HepG2 (cell line): ENCODE measurements at regions of chr5 and their contacts with region 1.

Region 1: DNA sequence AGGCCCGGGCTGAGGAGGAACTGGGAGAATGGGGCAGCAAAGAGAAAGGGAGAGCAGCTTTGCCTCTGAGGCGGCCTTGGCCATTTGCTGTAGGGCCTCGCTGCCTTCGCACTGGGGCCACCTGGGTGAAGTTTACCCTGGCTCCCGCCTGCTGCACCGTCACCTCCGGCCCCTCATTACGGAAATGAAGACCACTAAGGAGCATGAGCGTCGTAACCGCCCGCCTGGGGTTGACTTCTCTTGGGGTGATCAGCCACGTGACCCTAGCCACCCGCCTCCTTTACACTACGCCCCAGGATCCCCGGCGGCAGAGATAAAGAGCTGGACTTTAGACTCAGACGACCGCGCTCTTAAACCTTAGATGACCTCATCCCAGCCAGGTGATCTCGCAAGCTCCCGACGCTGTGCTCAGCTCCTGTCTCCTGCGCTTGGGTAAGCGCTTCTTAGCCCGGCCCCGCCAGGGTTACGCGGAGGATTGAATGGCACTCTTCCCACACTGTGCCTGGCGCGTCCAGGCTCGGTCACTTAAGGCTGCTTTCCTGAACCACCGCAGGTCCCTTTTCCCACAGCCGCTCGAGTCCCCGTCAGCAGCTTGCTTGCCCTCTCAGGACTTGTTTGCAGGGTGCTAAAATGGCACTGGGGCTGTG is 107.9 kb upstream of the LARP1 start:
- DNase-seq: peak; percentile 83
- ATAC-seq: peak; percentile 91
- H3K4me3 ChIP-seq: peak overlapping the region; percentile 62 to 75 (median 63)
- H3K27ac ChIP-seq: peak overlapping the region; percentile 74
- H3K4me1 ChIP-seq: peaks cover 67% of the 10 kb centered on the region
- H3K27me3 ChIP-seq: no peaks in the 10 kb centered on the region
- CTCF ChIP-seq: 0 out of 2 replicates have a peak, but pooled peaks have one; percentile 16
- EP300 ChIP-seq: peak; percentile 32 to 65; a peak in 3 of 4 replicates
- POLR2A ChIP-seq: peak in 1 of 2 experiments; percentile 80; a peak in 2 of 4 replicates
- RAD21 ChIP-seq: no peak

Region 2: DNA sequence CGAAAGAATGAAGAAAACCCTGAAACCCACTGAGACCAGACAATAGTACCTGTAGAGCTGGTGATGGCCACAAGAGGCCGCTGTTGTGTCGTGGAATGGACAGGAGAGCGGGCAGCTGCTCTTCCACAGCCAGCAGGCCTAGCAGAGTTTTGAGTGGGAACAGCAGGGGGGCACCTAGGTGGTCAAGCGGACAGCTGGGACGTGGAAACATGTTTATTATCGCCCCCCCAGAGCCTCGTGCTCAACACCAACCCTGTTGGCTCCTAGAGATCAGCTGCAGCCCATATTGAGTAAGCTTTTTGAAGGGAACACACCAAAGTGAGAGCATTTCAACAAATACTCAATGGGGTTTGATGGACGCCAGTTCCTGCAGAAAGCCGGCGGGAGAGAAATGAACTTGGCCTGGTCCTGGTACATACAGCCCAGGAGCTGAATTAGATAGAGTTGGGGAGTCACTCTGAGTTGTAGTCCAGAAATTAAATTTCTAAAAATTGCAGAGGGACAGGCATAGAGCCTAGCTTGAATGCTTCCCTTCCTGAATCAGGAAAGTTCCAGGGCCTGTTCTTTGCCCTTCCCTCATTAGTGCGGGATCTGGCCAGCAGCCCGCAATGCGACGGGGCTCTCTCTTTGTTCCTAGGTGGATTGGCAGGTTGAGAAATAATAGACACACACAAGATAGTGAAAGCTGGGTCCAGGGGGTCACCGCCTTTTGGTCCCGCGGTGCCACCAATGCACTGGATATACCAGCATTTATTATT is 574.6 kb before region 1 on chr5:
- CTCF ChIA-PET with region 1: no interaction called
- POLR2A ChIA-PET with region 1: no interaction called
- in situ Hi-C with region 1: no loop called
- intact Hi-C with region 1: loop called (anchors 5 kb)
- DNase-seq: peak; percentile 66
- ATAC-seq: peak; percentile 97
- H3K4me3 ChIP-seq: peak overlapping the region; percentile 6 to 59 (median 32); a peak in 4 of 6 replicates
- H3K27ac ChIP-seq: no peak overlapping the region
- H3K4me1 ChIP-seq: peaks cover 19% of the 10 kb centered on the region; the same call in 1 of the 2 replicates
- H3K27me3 ChIP-seq: no peaks in the 10 kb centered on the region
- CTCF ChIP-seq: peak; percentile 97
- EP300 ChIP-seq: no peak
- POLR2A ChIP-seq: no peak
- RAD21 ChIP-seq: peak; percentile 92

Region 3: GRCh38 chr5:154610321-154611154 is 36.7 kb before region 1 on chr5:
- CTCF ChIA-PET with region 1: no interaction called
- POLR2A ChIA-PET with region 1: no interaction called
- in situ Hi-C with region 1: no loop called
- intact Hi-C with region 1: no loop called
- DNase-seq: peak; percentile 55
- ATAC-seq: peak; percentile 98
- H3K4me3 ChIP-seq: peak overlapping the region in 2 of 3 experiments; percentile 10 to 59; a peak in 3 of 6 replicates
- H3K27ac ChIP-seq: no peak overlapping the region
- H3K4me1 ChIP-seq: peaks cover 12% of the 10 kb centered on the region
- H3K27me3 ChIP-seq: peaks cover 1 to 56% of the 10 kb centered on the region in 2 experiments; a peak in 4 of 5 replicates
- CTCF ChIP-seq: peak; percentile 98
- EP300 ChIP-seq: no peak
- POLR2A ChIP-seq: no peak
- RAD21 ChIP-seq: peak; percentile 96

Region 4: DNA sequence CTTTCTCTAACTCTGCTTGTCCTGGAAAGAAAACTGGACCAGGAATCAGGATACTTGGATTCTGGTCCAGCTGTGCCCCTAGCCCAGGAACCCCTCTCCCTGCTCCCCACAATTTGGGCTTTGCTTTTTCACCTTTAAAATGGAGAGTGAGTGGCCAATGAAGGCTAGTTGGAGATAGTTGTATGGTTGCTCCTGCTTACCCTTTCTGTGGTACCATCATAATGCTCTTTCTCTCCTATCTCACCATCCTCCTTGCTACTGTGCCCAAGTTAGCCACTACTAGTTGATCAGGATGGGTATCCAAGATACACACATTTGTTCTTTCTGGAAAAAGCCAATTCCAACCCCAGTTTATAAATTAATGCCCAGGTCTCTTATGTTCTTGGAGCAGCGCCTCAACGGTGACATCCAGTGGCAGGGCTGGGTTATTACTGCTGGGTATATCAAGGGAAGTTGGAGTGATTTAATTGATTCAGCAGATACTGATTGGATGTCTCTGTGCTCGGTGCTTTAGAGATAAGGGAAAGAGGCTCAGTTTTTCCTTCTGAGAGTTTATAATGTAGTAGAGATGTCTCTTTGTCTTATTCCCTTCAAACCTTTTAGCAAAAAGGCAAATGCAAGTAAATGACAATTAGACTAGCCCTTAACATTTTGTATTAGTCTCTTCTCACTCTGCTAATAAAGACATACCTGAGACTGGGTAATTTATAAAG is 164.6 kb after region 1 on chr5:
- CTCF ChIA-PET with region 1: interaction called, 29 read pairs
- POLR2A ChIA-PET with region 1: no interaction called
- in situ Hi-C with region 1: loop called (anchors 5 kb)
- intact Hi-C with region 1: loop called (anchors 1 kb)
- DNase-seq: peak; percentile 44
- ATAC-seq: peak; percentile 52
- H3K4me3 ChIP-seq: no peak overlapping the region
- H3K27ac ChIP-seq: no peak overlapping the region
- H3K4me1 ChIP-seq: peaks cover 14% of the 10 kb centered on the region
- H3K27me3 ChIP-seq: no peaks in the 10 kb centered on the region
- CTCF ChIP-seq: peak; percentile 68
- EP300 ChIP-seq: no peak
- POLR2A ChIP-seq: no peak
- RAD21 ChIP-seq: peak; percentile 56; the same call in 1 of the 2 replicates

Region 5: DNA sequence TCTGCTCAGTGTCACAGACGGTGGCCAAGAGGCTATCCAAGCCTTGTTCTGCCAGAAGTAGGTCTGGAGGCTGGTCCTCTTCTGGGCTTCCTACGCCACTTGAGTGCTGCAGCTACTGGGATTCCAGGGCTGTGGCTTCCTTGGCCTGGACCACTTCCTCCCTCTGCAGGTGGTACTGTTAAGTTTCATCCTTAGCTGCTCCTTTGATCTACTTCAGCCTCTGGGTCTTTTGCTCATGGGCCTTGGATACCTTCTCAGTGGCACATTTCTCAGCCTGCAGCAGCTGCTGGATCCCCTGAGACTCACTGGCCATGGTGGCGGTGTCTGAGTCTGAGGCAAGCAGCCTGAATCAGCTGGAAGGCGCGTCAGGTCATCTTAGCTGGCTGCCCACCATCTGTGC is 221.5 kb after region 1 on chr5:
- CTCF ChIA-PET with region 1: interaction called, 3 read pairs
- POLR2A ChIA-PET with region 1: interaction called, 6 read pairs
- in situ Hi-C with region 1: no loop called
- intact Hi-C with region 1: loop called (anchors 1 kb)
- DNase-seq: no peak
- ATAC-seq: peak; percentile 89
- H3K4me3 ChIP-seq: no peak overlapping the region
- H3K27ac ChIP-seq: no peak overlapping the region
- H3K4me1 ChIP-seq: peaks cover 20% of the 10 kb centered on the region
- H3K27me3 ChIP-seq: no peaks in the 10 kb centered on the region
- CTCF ChIP-seq: peak; percentile 58
- EP300 ChIP-seq: no peak
- POLR2A ChIP-seq: no peak
- RAD21 ChIP-seq: peak; percentile 56

Region 6: DNA sequence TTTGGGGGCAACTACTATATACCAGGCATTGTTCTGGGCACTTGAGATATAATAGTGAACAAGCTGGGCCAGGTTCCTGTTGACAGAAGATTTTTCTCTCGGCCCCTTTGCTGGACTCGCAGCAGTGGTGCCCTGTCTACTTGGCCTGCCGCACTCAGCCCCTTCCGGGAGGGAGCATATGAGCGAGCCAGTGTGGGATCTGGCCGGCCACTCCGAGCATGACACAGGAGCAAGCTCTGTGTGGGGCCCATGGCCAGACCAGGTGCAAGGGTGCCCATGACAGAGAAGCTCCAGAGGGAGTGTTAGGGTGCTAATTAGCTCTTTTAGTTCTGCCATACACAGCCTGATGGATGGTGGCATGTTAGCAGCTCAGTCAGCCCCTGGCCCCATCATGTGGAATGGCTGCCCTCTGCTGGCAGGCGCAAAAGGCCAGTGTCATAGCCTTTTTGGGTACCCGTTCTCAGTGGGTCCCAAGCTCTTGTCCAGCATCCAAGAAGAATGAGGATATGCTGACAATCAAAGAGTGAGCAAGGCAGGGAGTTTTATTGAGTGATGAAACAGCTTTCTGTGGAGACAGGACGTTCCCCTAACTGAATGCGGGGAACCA is 357.0 kb after region 1 on chr5:
- CTCF ChIA-PET with region 1: interaction called, 4 read pairs
- POLR2A ChIA-PET with region 1: no interaction called
- in situ Hi-C with region 1: loop called (anchors 10 kb)
- intact Hi-C with region 1: loop called (anchors 10 kb)
- DNase-seq: peak; percentile 30
- ATAC-seq: peak; percentile 92
- H3K4me3 ChIP-seq: no peak overlapping the region
- H3K27ac ChIP-seq: no peak overlapping the region
- H3K4me1 ChIP-seq: peaks cover 28% of the 10 kb centered on the region
- H3K27me3 ChIP-seq: no peaks in the 10 kb centered on the region
- CTCF ChIP-seq: peak; percentile 93
- EP300 ChIP-seq: no peak
- POLR2A ChIP-seq: no peak
- RAD21 ChIP-seq: peak; percentile 65